Caco-2 (cell line): ENCODE measurements at regions of chrX and their contacts with region 1.

Region 1: GRCh38 chrX:13283950-13284914 is 35.6 kb downstream of the ATXN3L start:
- DNase-seq: no peak
- H3K4me3 ChIP-seq: no peak overlapping the region
- H3K4me3 Mint-ChIP-seq: no peak overlapping the region
- H3K27ac Mint-ChIP-seq: no peak overlapping the region
- H3K4me1 ChIP-seq: peaks cover 27% of the 10 kb centered on the region
- H3K4me1 Mint-ChIP-seq: peaks cover 9% of the 10 kb centered on the region
- H3K27me3 ChIP-seq: no peaks in the 10 kb centered on the region
- H3K27me3 Mint-ChIP-seq: no peaks in the 10 kb centered on the region
- CTCF ChIP-seq: no peak

Region 2: DNA sequence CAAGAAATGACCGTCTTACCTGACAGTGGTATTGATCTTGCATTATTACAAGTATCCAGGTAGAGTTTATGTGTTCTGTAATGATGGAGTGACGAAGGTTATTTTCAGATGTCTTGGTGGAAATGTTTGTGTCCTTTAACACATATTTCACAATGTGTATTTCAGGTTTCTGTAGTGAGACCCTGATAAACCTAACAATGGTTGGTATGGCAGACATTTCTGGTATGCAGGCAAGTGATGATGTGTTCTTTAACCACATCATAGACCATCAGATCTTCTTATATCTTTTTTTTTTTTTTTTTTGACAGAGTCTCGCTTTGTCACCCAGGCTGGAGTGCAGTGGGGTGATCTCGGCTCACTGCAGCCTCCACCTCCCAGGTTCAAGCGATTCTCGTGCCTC is 50.3 kb after region 1 on chrX:
- CTCF ChIA-PET with region 1: no interaction called
- POLR2A ChIA-PET with region 1: no interaction called
- intact Hi-C with region 1: loop called (anchors 1 kb)
- DNase-seq: peak in 1 of 2 experiments; percentile 5
- H3K4me3 ChIP-seq: no peak overlapping the region
- H3K4me3 Mint-ChIP-seq: no peak overlapping the region
- H3K27ac Mint-ChIP-seq: peak overlapping the region; percentile 45
- H3K4me1 ChIP-seq: peaks cover 11% of the 10 kb centered on the region; the same call in 1 of the 2 replicates
- H3K4me1 Mint-ChIP-seq: no peaks in the 10 kb centered on the region
- H3K27me3 ChIP-seq: no peaks in the 10 kb centered on the region
- H3K27me3 Mint-ChIP-seq: no peaks in the 10 kb centered on the region
- CTCF ChIP-seq: no peak